A549 (cell line): ENCODE measurements at regions of chrX and their contacts with region 1.

Region 1: GRCh38 chrX:154370882-154371770 is 3.3 kb downstream of the FLNA start:
- DNase-seq: peak; percentile 70 to 96
- ATAC-seq: peak; percentile 30 to 65
- H3K4me3 ChIP-seq: peak overlapping the region; percentile 98
- H3K27ac ChIP-seq: peak overlapping the region; percentile 98 to 100
- H3K4me1 ChIP-seq: peaks cover 46% of the 10 kb centered on the region
- CTCF ChIP-seq: no peak
- EP300 ChIP-seq: no peak
- POLR2A ChIP-seq: peak; percentile 100
- RAD21 ChIP-seq: no peak

Region 2: DNA sequence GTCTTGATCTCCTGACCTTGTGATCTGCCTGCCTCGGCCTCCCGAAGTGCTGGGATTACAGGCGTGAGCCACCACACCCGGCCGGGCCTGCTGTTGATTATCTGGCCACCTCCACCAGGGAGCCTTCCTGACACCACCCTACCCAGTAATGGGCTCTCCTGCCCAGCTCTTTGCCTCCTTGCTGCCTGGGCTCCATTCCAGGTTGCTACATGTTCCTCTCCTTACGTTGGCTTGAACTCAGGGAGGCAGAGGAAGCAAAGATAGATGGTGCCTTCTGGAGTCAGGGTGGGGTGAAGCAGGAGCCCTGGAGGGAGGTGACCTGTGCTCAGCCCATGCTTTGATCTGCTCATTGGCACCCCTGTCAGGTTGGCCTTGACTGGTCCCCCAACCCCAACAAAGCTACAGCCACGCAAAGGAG is 23.0 kb before region 1 on chrX:
- CTCF ChIA-PET with region 1: interaction called, 19 read pairs
- POLR2A ChIA-PET with region 1: interaction called, 3 read pairs
- DNase-seq: peak in 1 of 2 experiments; percentile 44
- ATAC-seq: no peak
- H3K4me3 ChIP-seq: no peak overlapping the region
- H3K27ac ChIP-seq: no peak overlapping the region
- H3K4me1 ChIP-seq: peaks cover 54% of the 10 kb centered on the region
- CTCF ChIP-seq: no peak
- EP300 ChIP-seq: no peak
- POLR2A ChIP-seq: no peak
- RAD21 ChIP-seq: no peak

Region 3: GRCh38 chrX:154384284-154384892 is 13.3 kb after region 1 on chrX:
- CTCF ChIA-PET with region 1: interaction called, 49 read pairs
- POLR2A ChIA-PET with region 1: interaction called, 11 read pairs
- DNase-seq: no peak
- ATAC-seq: no peak
- H3K4me3 ChIP-seq: no peak overlapping the region
- H3K27ac ChIP-seq: no peak overlapping the region
- H3K4me1 ChIP-seq: peaks cover 15% of the 10 kb centered on the region
- CTCF ChIP-seq: peak; percentile 11; the same call in 1 of the 3 replicates
- EP300 ChIP-seq: no peak
- POLR2A ChIP-seq: no peak
- RAD21 ChIP-seq: no peak

Region 4: GRCh38 chrX:154411322-154411980 is 40.3 kb after region 1 on chrX and contains the start of gene TAFAZZIN:
- CTCF ChIA-PET with region 1: interaction called, 14 read pairs
- POLR2A ChIA-PET with region 1: interaction called, 3 read pairs
- DNase-seq: peak; percentile 78 to 80
- ATAC-seq: peak; percentile 55 to 56
- H3K4me3 ChIP-seq: peak within 1 kb of the TSS; percentile 89
- H3K27ac ChIP-seq: peak within 1 kb of the TSS; percentile 96 to 100
- H3K4me1 ChIP-seq: peaks cover 28% of the 10 kb centered on the region
- CTCF ChIP-seq: no peak
- EP300 ChIP-seq: no peak
- POLR2A ChIP-seq: peak; percentile 75
- RAD21 ChIP-seq: no peak
- polyA plus RNA-seq, gene TAFAZZIN: 32.6 and 36.9 TPM in 2 replicates

Region 5: GRCh38 chrX:154526901-154527675 is 156.0 kb after region 1 on chrX:
- CTCF ChIA-PET with region 1: interaction called, 21 read pairs
- POLR2A ChIA-PET with region 1: interaction called, 4 read pairs
- DNase-seq: peak in 1 of 2 experiments; percentile 89
- ATAC-seq: peak; percentile 62 to 64
- H3K4me3 ChIP-seq: no peak overlapping the region
- H3K27ac ChIP-seq: peak overlapping the region; percentile 72 to 93
- H3K4me1 ChIP-seq: peaks cover 70% of the 10 kb centered on the region
- CTCF ChIP-seq: peak; percentile 42
- EP300 ChIP-seq: no peak
- POLR2A ChIP-seq: peak; percentile 32
- RAD21 ChIP-seq: peak; percentile 35 to 37; a peak in 4 of 5 replicates